ENCODE measurements at regions of chr19 and their contacts with region 1.

Region 1: DNA sequence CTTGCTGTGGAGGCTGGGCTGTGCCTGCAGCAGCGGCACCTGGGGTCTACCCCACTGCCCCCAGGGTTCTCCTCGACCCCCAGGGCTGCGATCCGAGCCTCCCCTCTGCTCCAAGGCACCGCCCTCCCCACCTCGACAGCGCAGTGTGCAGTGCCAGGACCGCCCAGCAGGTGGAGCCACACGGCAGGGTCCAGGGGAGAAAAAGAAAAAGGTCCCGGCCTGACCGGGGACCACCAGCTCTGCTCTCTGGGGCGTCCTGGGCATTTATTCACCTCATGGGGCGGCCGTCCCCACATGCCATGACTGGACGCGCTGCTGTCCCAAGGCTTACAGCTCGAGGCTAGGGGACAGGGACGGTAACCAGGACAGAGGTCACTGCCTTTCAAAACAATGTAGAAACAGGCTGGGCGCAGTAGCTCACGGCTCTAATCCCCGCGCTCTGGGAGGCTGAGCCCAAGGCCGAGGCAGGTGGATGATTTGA is 10.6 kb downstream of the REXO1 start:
- DNase-seq: peak; percentile 81

Region 2: DNA sequence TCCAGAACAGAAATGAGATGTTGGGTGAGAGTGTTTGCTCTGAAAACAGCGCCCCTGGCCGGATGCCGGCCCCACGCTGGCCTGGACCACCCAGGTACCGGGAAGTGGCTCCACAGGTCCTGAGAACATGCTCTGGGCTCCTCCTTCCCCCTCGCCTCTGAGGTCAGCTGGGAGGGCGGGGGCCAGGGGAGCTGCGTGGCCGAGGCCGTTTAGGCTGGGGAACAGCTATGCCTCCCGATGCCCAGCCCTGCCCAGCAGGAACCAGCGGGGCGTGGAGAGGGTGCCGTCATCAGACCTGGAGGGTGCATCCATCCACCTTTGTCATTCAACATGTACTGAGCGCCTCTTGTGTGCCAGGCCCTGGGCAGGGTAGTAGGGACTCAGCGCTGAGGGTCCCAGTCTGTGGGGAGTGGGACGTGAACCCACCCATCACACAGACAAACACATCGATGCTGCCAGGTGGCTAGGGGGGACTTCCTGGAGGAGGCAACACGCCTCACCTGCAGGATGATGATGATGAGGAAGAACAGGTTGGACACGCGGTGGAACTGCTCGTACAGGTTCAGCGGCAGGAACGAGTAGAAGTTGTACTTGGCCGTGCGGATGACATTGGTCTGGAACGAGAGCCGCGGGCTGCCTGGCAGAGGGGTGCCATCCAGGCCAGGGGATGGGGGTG is 29.8 kb before region 1 on chr19:
- CTCF ChIA-PET with region 1: no interaction called
- POLR2A ChIA-PET with region 1: no interaction called
- DNase-seq: no peak

Region 3: GRCh38 chr19:1825909-1826556 is 11.6 kb before region 1 on chr19:
- CTCF ChIA-PET with region 1: interaction called, 32 read pairs
- POLR2A ChIA-PET with region 1: interaction called, 4 read pairs
- DNase-seq: peak; percentile 89

Region 4: DNA sequence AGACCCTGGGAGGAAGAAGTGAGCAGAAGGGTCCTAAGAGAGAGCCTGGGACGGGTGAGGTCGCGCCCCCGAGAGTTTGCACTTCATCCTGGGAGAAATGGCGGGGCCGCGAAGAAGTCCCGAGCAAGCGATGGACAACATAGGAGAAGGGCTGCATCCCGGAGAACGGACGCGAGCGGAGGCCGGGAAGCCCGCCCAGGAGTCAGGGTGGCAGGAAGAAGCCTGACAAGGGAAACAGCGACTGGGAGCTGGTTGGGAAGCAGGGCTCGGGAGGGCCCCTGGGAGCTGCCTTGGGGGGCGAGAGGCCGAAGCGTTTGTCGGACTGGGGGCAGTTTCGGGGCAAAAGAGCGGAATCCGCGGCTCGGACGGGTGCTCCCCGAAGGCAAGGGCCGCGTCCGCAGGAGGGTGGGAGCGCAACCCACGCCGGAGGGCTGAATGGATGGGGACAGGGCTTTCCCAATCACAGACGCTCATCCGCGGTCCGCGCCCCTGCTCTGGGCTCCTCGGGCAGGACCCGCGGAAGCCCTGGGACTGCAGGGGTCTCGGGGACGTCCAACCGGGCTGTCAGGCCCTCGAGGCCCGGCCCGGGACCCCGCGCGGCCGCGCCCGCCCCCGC is 47.2 kb after region 1 on chr19:
- CTCF ChIA-PET with region 1: no interaction called
- POLR2A ChIA-PET with region 1: no interaction called
- DNase-seq: no peak